CD14-positive monocyte (primary cell): ENCODE measurements at regions of chr10 and their contacts with region 1.

Region 1: DNA sequence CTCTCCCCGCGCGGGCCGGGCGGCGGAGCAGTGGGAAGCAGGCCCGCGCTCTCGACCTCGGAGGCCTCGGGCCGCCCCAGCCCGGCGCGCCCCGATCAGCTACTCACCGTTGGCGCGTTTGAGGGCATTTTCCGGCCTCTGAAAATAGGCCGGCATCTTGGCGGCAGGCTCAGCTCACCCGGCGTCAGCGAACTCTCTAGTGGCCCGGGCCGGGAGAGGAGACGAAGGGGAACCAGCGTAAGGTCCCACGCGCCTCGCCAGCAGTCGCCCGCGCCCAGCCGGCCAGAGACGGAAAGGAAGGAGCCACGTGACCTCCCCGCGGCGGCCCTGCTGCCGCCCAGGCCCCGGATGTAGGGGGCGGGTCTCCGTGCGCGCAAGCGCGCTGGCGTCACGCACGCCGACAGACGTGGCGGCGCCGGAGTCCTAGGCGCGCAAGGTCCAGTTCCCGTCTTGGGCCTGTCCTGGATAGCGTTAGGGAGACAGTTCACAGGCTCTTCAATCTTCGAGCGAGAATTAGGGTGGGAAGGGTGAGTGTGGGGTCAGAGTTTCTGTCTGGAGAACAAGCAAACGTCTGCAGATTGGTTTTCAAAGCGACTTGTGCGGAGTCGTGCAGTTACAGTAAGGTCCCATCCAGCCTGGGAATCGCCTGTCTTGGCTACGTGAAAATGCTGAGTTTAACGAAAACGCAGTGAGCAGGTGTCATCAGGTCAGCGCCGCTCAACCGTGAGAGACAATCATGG is at the start of gene EIF3A:
- DNase-seq: peak; percentile 93 to 95 (median 93)
- H3K4me3 ChIP-seq: peak within 1 kb of the TSS; percentile 81 to 94 (median 83)
- H3K4me3 Mint-ChIP-seq: peak within 1 kb of the TSS; percentile 92 to 98
- H3K27ac ChIP-seq: peak within 1 kb of the TSS; percentile 90 to 99
- H3K27ac Mint-ChIP-seq: peak within 1 kb of the TSS; percentile 97 to 100 (median 98)
- H3K4me1 ChIP-seq: peaks cover 50 to 63% of the 10 kb centered on the region in 2 donors
- H3K4me1 Mint-ChIP-seq: peaks cover 51% of the 10 kb centered on the region
- H3K27me3 ChIP-seq: no peaks in the 10 kb centered on the region
- H3K27me3 Mint-ChIP-seq: peaks cover 0 to 1% (median 0%) of the 10 kb centered on the region in 3 donors
- CTCF ChIP-seq: no peak
- polyA plus RNA-seq, gene EIF3A: 18.8 to 49.1 (median 24.2) TPM

Region 2: GRCh38 chr10:119113751-119114732 is 33.4 kb after region 1 on chr10:
- intact Hi-C with region 1: loop called (anchors 5 kb)
- DNase-seq: peak; percentile 40 to 69 (median 61)
- H3K4me3 ChIP-seq: peak overlapping the region in 1 of 3 experiments; percentile 37
- H3K4me3 Mint-ChIP-seq: peak overlapping the region; percentile 21 to 78
- H3K27ac ChIP-seq: peak overlapping the region; percentile 46 to 74
- H3K27ac Mint-ChIP-seq: peak overlapping the region; percentile 74 to 90 (median 82)
- H3K4me1 ChIP-seq: peaks cover 51 to 55% of the 10 kb centered on the region in 2 donors
- H3K4me1 Mint-ChIP-seq: peaks cover 40% of the 10 kb centered on the region
- H3K27me3 ChIP-seq: no peaks in the 10 kb centered on the region
- H3K27me3 Mint-ChIP-seq: peaks cover 0 to 3% (median 0%) of the 10 kb centered on the region in 3 donors
- CTCF ChIP-seq: no peak

Region 3: GRCh38 chr10:119131512-119132240 is 51.0 kb after region 1 on chr10:
- intact Hi-C with region 1: loop called (anchors 5 to 10 kb)
- DNase-seq: peak; percentile 64 to 81 (median 78)
- H3K4me3 ChIP-seq: peak overlapping the region in 2 of 3 experiments; percentile 34 to 72
- H3K4me3 Mint-ChIP-seq: peak overlapping the region; percentile 60 to 81
- H3K27ac ChIP-seq: peak overlapping the region; percentile 91 to 94
- H3K27ac Mint-ChIP-seq: peak overlapping the region; percentile 93 to 99 (median 95)
- H3K4me1 ChIP-seq: peaks cover 77 to 78% of the 10 kb centered on the region in 2 donors
- H3K4me1 Mint-ChIP-seq: peaks cover 74% of the 10 kb centered on the region
- H3K27me3 ChIP-seq: no peaks in the 10 kb centered on the region
- H3K27me3 Mint-ChIP-seq: peaks cover 0 to 2% (median 0%) of the 10 kb centered on the region in 3 donors
- CTCF ChIP-seq: no peak

Region 4: GRCh38 chr10:119139464-119140067 is 58.9 kb after region 1 on chr10:
- intact Hi-C with region 1: loop called (anchors 5 to 10 kb)
- DNase-seq: peak; percentile 29 to 50 (median 48)
- H3K4me3 ChIP-seq: no peak overlapping the region
- H3K4me3 Mint-ChIP-seq: no peak overlapping the region
- H3K27ac ChIP-seq: peak overlapping the region; percentile 44 to 66
- H3K27ac Mint-ChIP-seq: peak overlapping the region in 5 of 7 donors; percentile 75 to 91 (median 88)
- H3K4me1 ChIP-seq: peaks cover 37 to 38% of the 10 kb centered on the region in 2 donors
- H3K4me1 Mint-ChIP-seq: peaks cover 34% of the 10 kb centered on the region
- H3K27me3 ChIP-seq: no peaks in the 10 kb centered on the region
- H3K27me3 Mint-ChIP-seq: peaks cover 0 to 3% (median 0%) of the 10 kb centered on the region in 3 donors
- CTCF ChIP-seq: peak; percentile 78

Region 5: DNA sequence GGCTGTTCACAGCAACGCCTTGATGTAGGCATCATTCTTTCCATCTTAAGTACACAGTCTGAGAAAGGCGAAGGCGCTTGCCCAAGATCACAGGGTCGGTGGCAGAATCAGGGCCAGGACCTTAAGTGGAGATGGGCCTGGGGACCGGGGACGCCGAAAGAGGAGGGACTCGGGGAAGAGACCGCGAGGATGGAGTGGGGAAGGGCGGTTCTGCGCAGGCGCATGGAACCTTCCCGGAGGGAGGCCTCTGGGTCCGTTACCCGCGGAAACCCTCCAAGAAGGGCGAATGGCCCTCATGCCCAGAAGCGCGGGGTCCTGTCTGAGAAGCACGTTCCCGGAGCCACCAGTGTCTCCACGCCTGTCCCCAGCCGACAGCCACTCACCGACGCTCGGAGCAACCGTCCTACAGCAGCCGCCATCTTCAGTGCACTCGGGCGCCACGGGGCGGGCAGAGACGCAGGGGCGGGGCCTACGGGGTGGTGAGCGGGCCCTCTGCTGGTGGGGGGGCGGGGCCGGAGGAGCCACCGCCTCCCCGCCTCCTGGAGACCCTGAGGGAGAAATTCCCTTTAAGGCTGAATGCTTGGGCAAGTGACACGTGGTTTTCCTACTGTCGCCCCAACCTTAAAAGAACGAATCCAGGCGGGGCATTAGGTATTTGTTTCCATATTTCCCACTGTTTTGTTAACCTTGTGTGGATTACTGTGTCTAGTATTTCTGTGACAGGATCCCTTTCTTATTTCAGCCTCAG is 97.9 kb after region 1 on chr10 and contains the start of gene PRDX3:
- intact Hi-C with region 1: loop called in 1 of 2 experiments (anchors 5 kb)
- DNase-seq: peak; percentile 79 to 85 (median 80)
- H3K4me3 ChIP-seq: peak within 1 kb of the TSS; percentile 81 to 88 (median 87)
- H3K4me3 Mint-ChIP-seq: peak within 1 kb of the TSS; percentile 87 to 95
- H3K27ac ChIP-seq: peak within 1 kb of the TSS; percentile 74 to 87
- H3K27ac Mint-ChIP-seq: peak within 1 kb of the TSS; percentile 76 to 98 (median 96)
- H3K4me1 ChIP-seq: peaks cover 30 to 32% of the 10 kb centered on the region in 2 donors
- H3K4me1 Mint-ChIP-seq: peaks cover 33% of the 10 kb centered on the region
- H3K27me3 ChIP-seq: no peaks in the 10 kb centered on the region
- H3K27me3 Mint-ChIP-seq: no peaks in the 10 kb centered on the region
- CTCF ChIP-seq: peak; percentile 28
- polyA plus RNA-seq, gene PRDX3: 81.9 to 459 (median 410) TPM

Region 6: GRCh38 chr10:119270762-119271366 is 190.2 kb after region 1 on chr10:
- intact Hi-C with region 1: loop called in 1 of 2 experiments (anchors 5 kb)
- DNase-seq: peak; percentile 70 to 83 (median 82)
- H3K4me3 ChIP-seq: peak overlapping the region in 1 of 3 experiments; percentile 52
- H3K4me3 Mint-ChIP-seq: peak overlapping the region; percentile 67 to 90
- H3K27ac ChIP-seq: peak overlapping the region; percentile 68 to 90
- H3K27ac Mint-ChIP-seq: peak overlapping the region; percentile 95 to 99 (median 99)
- H3K4me1 ChIP-seq: peaks cover 24 to 28% of the 10 kb centered on the region in 2 donors
- H3K4me1 Mint-ChIP-seq: peaks cover 40% of the 10 kb centered on the region
- H3K27me3 ChIP-seq: no peaks in the 10 kb centered on the region
- H3K27me3 Mint-ChIP-seq: peaks cover 0 to 9% (median 8%) of the 10 kb centered on the region in 3 donors
- CTCF ChIP-seq: no peak

Region 7: DNA sequence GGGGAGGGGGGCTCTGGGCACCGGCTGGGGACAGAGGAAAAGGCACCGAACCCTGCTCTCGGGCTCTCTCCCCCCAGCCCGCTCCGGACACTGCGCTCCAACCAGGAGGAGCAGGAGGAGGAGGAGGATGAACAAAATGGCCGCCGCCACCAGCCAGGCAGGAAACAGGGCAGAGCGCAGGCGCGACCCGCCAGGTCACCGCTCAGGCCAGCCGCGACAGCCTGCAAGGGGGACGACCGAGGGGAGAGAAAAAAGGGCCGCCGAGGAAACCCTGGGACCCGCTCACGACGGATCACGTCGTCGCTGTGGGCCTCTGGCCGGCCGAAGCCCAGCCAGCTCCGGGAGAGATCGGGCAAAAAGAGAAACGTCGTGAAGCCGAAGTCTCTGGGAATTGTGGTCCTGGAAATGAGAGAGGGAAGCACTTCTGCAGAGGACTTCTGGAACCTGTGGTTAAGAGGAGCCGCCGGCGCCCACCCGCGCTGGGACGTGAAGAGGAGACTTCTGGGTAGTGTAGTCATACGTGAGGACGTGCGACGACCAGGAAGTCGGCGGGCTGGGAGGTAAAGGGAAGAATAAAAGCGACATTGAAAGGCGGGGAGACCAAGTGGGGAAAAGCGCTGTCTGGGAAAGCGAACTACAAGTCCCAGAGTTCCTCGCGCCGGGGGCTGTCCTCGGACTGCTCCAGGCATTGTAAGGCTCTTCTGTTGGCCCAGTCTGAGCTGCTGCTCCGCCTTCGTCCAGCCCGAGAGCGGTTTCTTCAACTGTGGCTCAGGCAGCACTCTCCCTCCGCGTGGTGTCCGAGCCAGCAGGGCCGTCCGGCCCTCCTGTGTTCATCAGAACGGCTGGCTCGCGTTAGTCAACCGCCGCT is 516.1 kb after region 1 on chr10 and contains the start of gene TIAL1:
- intact Hi-C with region 1: loop called in 1 of 2 experiments (anchors 5 kb)
- DNase-seq: peak; percentile 96 to 98 (median 97)
- H3K4me3 ChIP-seq: peak within 1 kb of the TSS; percentile 56 to 99 (median 93)
- H3K4me3 Mint-ChIP-seq: peak within 1 kb of the TSS; percentile 95 to 98
- H3K27ac ChIP-seq: peak within 1 kb of the TSS; percentile 92 to 99
- H3K27ac Mint-ChIP-seq: peak within 1 kb of the TSS; percentile 97 to 99 (median 98)
- H3K4me1 ChIP-seq: peaks cover 41 to 52% of the 10 kb centered on the region in 2 donors
- H3K4me1 Mint-ChIP-seq: peaks cover 46% of the 10 kb centered on the region
- H3K27me3 ChIP-seq: no peaks in the 10 kb centered on the region
- H3K27me3 Mint-ChIP-seq: no peaks in the 10 kb centered on the region
- CTCF ChIP-seq: no peak
- polyA plus RNA-seq, gene TIAL1: 6.7 to 118 (median 7.2) TPM